WTC11 (cell line): ENCODE measurements at regions of chr1 and their contacts with region 1.

Region 1: GRCh38 chr1:113759333-113760101 is at the start of gene PHTF1:
- DNase-seq: peak; percentile 87
- ATAC-seq: peak; percentile 90
- H3K4me3 Mint-ChIP-seq: peak within 1 kb of the TSS; percentile 92
- H3K27ac Mint-ChIP-seq: peak within 1 kb of the TSS; percentile 99
- H3K4me1 Mint-ChIP-seq: peaks cover 36% of the 10 kb centered on the region
- H3K27me3 Mint-ChIP-seq: no peaks in the 10 kb centered on the region; the same call in 1 of the 2 replicates
- CTCF ChIP-seq: no peak
- total RNA-seq, gene PHTF1: 23.9 to 28.7 TPM (median 25.2 TPM) in 3 replicates

Region 2: DNA sequence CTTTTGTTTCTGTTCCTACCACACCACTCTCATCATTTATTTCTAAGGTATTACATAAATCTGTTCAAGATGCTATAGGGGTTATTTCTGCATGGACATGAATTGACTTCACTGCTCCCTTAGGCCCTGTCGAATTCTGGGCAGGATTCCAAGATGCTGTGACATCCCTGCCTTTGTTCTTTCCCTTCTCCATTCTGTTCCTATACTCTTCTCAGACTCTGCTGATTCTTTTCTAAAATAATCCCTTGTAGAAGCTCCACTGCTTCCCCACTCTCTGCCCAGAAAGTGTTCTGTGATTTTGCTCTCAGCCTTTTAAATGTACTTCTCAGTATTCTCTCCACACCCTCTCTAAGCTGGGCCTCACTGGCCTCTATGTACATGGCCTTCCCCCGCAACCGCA is 99.4 kb before region 1 on chr1:
- CTCF ChIA-PET with region 1: no interaction called
- POLR2A ChIA-PET with region 1: no interaction called
- DNase-seq: no peak
- ATAC-seq: no peak
- H3K4me3 Mint-ChIP-seq: no peak overlapping the region
- H3K27ac Mint-ChIP-seq: no peak overlapping the region
- H3K4me1 Mint-ChIP-seq: no peaks in the 10 kb centered on the region
- H3K27me3 Mint-ChIP-seq: no peaks in the 10 kb centered on the region
- CTCF ChIP-seq: no peak

Region 3: GRCh38 chr1:113811888-113812660 is 52.6 kb after region 1 on chr1 and contains the start of gene RSBN1:
- CTCF ChIA-PET with region 1: interaction called, 5 read pairs
- POLR2A ChIA-PET with region 1: interaction called, 19 read pairs
- DNase-seq: peak; percentile 98
- ATAC-seq: peak; percentile 97
- H3K4me3 Mint-ChIP-seq: peak within 1 kb of the TSS; percentile 96
- H3K27ac Mint-ChIP-seq: peak within 1 kb of the TSS; percentile 96
- H3K4me1 Mint-ChIP-seq: peaks cover 16% of the 10 kb centered on the region
- H3K27me3 Mint-ChIP-seq: no peaks in the 10 kb centered on the region
- CTCF ChIP-seq: no peak
- total RNA-seq, gene RSBN1: 15.5 to 19.3 TPM (median 19.1 TPM) in 3 replicates